ENCODE measurements at regions of chr22 and their contacts with region 1.

Region 1: GRCh38 chr22:50276143-50276542 is 6.0 kb upstream of the MAPK11 start:
- DNase-seq: peak; percentile 80
- ATAC-seq: peak; percentile 52
- H3K4me3 Mint-ChIP-seq: no peak overlapping the region
- H3K27ac Mint-ChIP-seq: no peak overlapping the region
- H3K4me1 Mint-ChIP-seq: peaks cover 4% of the 10 kb centered on the region
- H3K27me3 Mint-ChIP-seq: peaks cover 5% of the 10 kb centered on the region

Region 2: GRCh38 chr22:50030297-50031188 is 245.6 kb before region 1 on chr22:
- CTCF ChIA-PET with region 1: no interaction called
- DNase-seq: peak; percentile 86
- ATAC-seq: peak; percentile 96
- H3K4me3 Mint-ChIP-seq: no peak overlapping the region
- H3K27ac Mint-ChIP-seq: no peak overlapping the region
- H3K4me1 Mint-ChIP-seq: peaks cover 12% of the 10 kb centered on the region
- H3K27me3 Mint-ChIP-seq: peaks cover 5% of the 10 kb centered on the region

Region 3: GRCh38 chr22:50293441-50294318 is 17.5 kb after region 1 on chr22:
- CTCF ChIA-PET with region 1: interaction called, 16 read pairs
- DNase-seq: no peak
- ATAC-seq: peak; percentile 31
- H3K4me3 Mint-ChIP-seq: no peak overlapping the region
- H3K27ac Mint-ChIP-seq: no peak overlapping the region
- H3K4me1 Mint-ChIP-seq: peaks cover 12% of the 10 kb centered on the region
- H3K27me3 Mint-ChIP-seq: peaks cover 16% of the 10 kb centered on the region

Region 4: DNA sequence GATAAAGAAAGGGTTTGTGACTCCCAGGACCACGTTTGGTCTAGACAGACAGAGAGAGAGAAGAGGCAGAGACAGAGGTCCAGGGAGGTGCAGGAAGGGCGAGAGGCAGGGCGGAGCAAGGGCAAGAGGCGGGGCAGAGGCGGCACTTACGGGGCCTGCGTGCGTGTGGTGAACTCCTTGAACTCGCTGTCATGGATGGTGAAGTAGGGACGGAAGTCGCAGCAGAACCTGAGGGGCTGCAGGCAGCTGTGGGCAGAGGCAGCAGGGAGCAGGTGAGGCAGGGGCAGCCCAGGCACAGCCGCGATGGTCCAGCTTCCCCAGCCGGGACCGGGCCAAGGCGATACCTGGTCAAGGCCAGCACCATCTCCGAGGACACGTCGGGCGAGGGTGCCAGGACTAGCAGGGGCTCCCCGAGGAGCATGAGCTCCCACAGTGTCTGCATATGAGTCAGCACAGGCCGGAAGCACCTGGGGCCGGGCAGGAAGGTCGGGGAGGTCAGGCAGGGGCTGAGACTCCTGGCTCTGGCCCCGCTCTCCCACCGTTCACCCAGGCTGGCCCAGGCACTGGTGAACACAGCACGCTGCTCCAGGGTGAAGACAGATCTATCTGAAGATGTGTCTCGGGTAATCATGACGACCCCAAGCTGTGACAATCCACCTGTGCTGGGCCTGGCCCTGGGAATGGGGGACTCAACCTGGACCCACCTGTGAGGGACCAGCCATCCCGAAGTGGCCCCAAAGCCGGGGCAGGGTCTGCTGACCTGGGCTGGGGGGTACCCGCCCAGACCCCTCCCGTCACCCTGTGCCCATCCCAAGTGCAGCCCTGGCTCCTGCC is 38.5 kb after region 1 on chr22:
- CTCF ChIA-PET with region 1: interaction called, 13 read pairs
- DNase-seq: peak; percentile 92
- ATAC-seq: peak; percentile 96
- H3K4me3 Mint-ChIP-seq: peak overlapping the region; percentile 84
- H3K27ac Mint-ChIP-seq: peak overlapping the region; percentile 93
- H3K4me1 Mint-ChIP-seq: peaks cover 15% of the 10 kb centered on the region
- H3K27me3 Mint-ChIP-seq: no peaks in the 10 kb centered on the region

Region 5: DNA sequence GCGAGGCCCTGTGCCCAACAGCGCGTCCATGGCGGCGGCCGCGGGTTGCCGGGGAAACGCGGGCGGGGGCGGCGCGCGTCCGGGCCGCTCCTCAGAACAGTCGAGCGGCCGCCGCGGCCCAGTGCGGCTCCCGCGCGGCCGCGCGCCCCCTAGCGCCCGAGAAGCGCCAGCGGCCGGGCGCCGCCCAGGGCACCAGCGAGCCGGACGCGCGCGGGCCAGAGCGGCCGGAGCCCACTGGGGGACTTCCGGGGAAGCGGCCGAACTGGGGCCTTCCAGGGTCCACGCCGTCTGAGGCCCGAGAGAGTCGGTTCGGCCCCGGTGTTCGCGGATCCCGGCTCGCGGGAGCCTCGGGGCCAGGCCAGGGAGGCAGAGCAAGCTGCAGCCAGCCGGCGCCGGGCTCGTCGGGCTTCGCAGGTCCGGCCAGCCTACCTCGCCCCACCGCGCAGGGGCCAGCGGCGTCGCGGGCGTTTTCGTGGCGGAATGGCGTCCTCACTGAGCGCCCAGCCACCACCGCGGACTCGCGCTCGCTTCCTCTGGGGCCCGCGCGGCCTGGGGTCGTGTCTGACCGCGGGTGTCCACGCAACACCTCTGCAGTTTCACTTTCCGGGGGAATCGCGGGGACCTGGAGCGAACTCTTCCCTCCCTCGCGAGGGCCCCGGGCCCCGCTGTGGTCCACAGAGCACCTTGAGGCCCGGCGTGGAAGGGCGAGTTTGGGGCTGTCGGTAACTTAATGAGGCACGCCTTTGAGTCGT is 51.0 kb after region 1 on chr22 and contains the start of gene DENND6B:
- CTCF ChIA-PET with region 1: interaction called, 105 read pairs
- DNase-seq: peak; percentile 73
- ATAC-seq: peak; percentile 96
- H3K4me3 Mint-ChIP-seq: peak within 1 kb of the TSS; percentile 74
- H3K27ac Mint-ChIP-seq: peak within 1 kb of the TSS; percentile 83
- H3K4me1 Mint-ChIP-seq: peaks cover 17% of the 10 kb centered on the region
- H3K27me3 Mint-ChIP-seq: peaks cover 13% of the 10 kb centered on the region
- total RNA-seq, gene DENND6B: 5.7 to 8.8 TPM

Region 6: DNA sequence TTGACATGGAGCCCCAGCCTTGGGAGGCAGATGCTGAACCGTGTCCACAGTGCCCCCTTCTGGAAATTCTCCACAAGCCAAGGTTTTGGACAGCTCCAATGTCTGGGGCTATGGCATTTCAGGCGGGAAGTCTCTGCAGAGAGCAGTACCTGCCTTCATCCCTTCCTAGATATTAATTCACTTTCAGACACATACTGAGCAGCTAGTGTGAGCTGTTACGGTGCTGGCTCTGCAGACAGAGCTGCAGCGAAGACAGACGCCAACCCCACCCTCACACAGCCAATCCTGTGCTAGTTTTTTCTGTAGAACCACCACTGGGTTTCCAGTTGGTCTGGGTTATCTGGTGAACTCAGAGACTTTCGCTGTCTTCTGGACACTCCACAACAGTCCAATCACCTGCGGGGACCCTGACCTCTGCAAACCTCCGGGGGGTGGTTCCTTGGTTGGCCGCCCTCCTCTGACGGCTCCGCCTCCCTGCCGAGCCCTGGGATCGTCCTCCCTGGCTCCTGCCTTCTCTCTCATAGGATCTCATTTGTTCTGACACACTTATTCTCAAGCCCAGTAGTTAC is 222.3 kb after region 1 on chr22:
- CTCF ChIA-PET with region 1: interaction called, 13 read pairs
- DNase-seq: peak; percentile 85
- ATAC-seq: peak; percentile 92
- H3K4me3 Mint-ChIP-seq: no peak overlapping the region
- H3K27ac Mint-ChIP-seq: no peak overlapping the region
- H3K4me1 Mint-ChIP-seq: peaks cover 7% of the 10 kb centered on the region
- H3K27me3 Mint-ChIP-seq: peaks cover 13% of the 10 kb centered on the region